Astrocyte of the cerebellum (primary cell): ENCODE measurements at regions of chr17 and their contacts with region 1.

Region 1: DNA sequence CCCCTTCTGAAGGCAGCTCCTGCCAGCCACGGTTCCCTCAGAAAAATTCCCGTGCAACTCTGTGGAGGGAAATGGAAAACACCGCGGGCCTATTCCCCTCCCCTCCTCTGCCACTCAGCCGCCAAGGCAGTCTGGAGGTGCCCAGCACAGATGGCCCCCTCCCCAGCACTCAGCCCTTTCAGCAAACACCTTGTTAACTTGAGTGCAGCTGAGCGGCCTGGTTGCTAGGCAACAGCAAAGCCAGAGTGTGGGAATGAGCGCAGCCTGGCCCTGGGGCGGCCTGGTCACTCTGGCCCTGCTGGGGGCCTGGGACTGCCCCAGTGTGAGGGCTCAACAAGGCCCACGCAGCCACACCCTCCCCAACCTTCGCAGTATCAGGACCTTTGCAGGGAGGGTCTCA is 32.8 kb downstream of the CACNA1G start:
- DNase-seq: no peak
- H3K4me3 ChIP-seq: no peak overlapping the region
- CTCF ChIP-seq: no peak

Region 2: GRCh38 chr17:50541716-50542688 is 51.3 kb before region 1 on chr17:
- in situ Hi-C with region 1: no loop called
- DNase-seq: no peak
- H3K4me3 ChIP-seq: peak overlapping the region; percentile 45
- CTCF ChIP-seq: peak; percentile 13

Region 3: DNA sequence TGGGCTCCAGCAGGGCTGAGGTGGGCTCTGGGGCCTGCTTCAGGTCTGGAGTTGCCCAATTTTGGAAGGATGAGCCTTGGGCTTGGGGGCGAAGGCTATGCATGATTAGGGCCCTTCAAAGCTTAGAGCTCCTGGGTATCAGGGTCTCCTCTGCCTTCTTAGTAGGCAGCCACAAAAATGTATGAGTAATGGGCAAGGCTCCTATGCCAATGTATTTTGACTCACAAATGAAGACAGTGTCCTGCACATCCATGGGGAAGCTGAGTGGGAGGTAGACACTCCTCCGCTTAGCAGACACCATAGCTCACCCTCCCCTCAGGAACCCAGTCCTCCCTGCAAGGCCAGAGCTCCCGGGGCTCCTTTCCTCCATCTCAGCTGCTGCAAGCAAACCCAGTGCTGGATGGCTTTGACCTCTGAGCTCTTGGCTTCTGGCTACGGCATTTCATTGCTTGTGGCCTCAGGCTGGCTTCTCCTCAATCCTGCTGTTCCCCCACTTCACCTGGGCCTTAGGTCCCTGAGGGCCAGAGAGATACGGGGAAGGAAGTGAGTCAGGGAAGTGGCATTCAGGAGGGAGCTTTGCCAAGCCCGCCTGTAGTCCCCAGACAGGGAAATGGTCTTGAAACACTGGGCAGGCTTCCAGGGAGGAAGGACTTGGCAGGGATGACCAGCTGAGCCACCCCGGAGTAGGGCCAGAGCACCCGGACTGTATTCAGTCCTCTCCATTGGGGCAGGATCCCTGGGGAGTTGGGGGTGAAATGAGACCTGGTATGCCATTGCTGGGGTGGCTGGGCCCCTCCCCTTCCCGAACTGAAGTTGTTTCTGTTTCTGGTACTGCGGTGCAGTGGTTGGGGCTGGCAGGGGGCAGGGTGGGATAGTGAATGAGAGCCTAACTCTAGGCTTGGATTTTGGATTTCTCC is 45.8 kb after region 1 on chr17:
- in situ Hi-C with region 1: loop called (anchors 5 kb)
- DNase-seq: peak; percentile 94
- H3K4me3 ChIP-seq: no peak overlapping the region
- CTCF ChIP-seq: no peak